Right cardiac atrium (tissue), 5 donors: ENCODE measurements at regions of chr3 and their contacts with region 1.

Region 1: GRCh38 chr3:171142985-171143384 is 116.5 kb upstream of the SLC2A2 start:
- DNase-seq: peak in 1 of 3 donors; percentile 33
- ATAC-seq: no peak
- H3K4me3 ChIP-seq: no peak overlapping the region
- H3K27ac ChIP-seq: no peak overlapping the region
- H3K4me1 ChIP-seq: no peaks in the 10 kb centered on the region
- H3K27me3 ChIP-seq: no peaks in the 10 kb centered on the region

Region 2: GRCh38 chr3:171851680-171852058 is 708.7 kb after region 1 on chr3:
- intact Hi-C with region 1: loop called in 1 of 4 experiments (anchors 10 kb)
- DNase-seq: no peak
- ATAC-seq: peak in 1 of 2 donors; percentile 66
- H3K4me3 ChIP-seq: no peak overlapping the region
- H3K27ac ChIP-seq: no peak overlapping the region
- H3K4me1 ChIP-seq: no peaks in the 10 kb centered on the region
- H3K27me3 ChIP-seq: no peaks in the 10 kb centered on the region